ENCODE measurements at regions of chr2 and their contacts with region 1.

Region 1: GRCh38 chr2:218152765-218153164 is 14.0 kb downstream of the CXCR1 start:
- DNase-seq: peak; percentile 89
- H3K4me3 ChIP-seq: no peak overlapping the region
- H3K27ac ChIP-seq: peak overlapping the region; percentile 4
- H3K4me1 ChIP-seq: peaks cover 27% of the 10 kb centered on the region
- H3K27me3 ChIP-seq: no peaks in the 10 kb centered on the region
- CTCF ChIP-seq: no peak

Region 2: GRCh38 chr2:218166791-218167190 is 14.0 kb after region 1 on chr2 and contains the start of gene CXCR1:
- CTCF ChIA-PET with region 1: interaction called, 3 read pairs
- dilution Hi-C with region 1: no loop called
- in situ Hi-C with region 1: no loop called
- intact Hi-C with region 1: loop called (anchors 2 kb)
- DNase-seq: peak; percentile 70
- H3K4me3 ChIP-seq: no peak within 1 kb of the TSS
- H3K27ac ChIP-seq: no peak within 1 kb of the TSS
- H3K4me1 ChIP-seq: peaks cover 36% of the 10 kb centered on the region
- H3K27me3 ChIP-seq: no peaks in the 10 kb centered on the region
- CTCF ChIP-seq: peak; percentile 4 to 35
- total RNA-seq, gene CXCR1: under 0.01 to 1.1 TPM